Left ventricle myocardium superior (tissue), 1 donor: ENCODE measurements at regions of chr2 and their contacts with region 1.

Region 1: DNA sequence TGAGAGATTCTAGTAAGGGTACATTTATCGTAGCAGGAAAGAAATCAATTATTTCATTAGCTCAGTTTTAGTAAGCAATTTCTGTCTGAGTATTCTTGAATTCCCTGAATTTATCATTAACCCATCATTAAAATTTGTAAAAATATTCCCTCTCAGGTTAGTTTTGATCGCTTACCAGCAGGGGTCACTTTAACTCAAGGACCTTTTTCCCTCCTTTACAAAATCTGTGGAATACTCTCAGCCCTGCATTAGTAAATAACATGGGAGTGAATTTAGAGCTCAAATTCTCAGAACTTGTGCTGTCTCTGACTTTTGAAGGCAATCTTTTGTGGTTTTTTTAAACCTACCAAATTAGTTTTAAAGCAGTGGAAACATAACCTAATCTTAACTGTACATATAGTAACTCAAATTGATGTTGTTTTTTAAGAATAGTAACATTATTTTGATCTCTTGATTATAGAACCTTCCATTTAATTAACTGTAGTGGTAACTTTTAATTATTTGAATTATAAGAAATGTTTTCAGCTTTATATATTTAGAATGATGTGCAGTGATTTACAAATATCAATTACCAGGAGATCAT is 97.2 kb downstream of the AGPS start:
- DNase-seq: no peak
- ATAC-seq: no peak

Region 2: DNA sequence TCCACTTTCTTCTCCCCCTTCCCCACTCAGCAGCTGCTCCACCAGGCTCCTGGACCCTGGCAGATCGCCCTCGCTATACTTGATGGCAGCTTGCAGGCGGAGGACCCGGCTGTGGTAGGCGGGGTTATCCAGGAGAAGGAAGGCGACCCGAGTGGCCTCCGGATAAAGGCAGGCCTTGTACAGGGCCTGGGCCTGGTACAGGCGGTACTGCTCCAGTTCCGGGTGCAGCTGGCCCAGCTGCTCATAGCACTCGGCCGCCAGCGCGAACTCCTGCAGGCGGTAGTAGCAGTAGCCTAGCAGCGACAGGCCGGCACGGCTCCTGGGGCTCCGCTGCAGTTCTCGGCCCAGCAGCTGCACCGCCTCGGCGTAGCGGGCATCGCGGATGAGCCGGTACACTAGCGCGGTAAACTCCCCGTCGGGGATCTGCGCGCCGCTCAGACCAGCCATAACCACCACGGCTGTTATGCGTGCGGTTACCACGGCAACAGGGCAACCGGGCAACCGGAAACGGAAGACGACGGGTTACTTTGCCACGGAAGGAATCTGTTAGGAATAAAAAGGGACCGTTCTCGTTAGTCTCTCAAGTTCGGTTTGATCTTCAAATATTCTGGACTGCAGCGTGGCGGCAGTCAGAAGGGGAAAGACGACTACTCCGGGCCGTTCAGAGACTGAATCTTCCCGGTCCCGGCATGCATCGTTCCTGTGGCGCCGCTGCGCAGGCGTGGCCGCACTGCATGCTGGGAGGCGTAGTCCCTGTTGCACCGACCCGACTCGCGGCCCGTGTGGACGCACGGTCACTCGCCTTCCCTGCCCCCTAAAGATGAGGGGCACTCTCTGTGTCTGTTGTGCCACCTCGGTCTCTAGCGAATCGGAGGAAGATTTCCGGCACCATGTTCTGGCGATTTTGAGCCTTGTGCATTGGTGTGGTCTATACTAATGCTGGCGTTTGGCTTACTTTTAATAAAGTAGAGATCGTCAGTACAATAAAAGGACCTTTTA is 128.7 kb after region 1 on chr2:
- intact Hi-C with region 1: loop called (anchors 10 kb)
- DNase-seq: peak; percentile 95
- ATAC-seq: peak; percentile 98

Region 3: DNA sequence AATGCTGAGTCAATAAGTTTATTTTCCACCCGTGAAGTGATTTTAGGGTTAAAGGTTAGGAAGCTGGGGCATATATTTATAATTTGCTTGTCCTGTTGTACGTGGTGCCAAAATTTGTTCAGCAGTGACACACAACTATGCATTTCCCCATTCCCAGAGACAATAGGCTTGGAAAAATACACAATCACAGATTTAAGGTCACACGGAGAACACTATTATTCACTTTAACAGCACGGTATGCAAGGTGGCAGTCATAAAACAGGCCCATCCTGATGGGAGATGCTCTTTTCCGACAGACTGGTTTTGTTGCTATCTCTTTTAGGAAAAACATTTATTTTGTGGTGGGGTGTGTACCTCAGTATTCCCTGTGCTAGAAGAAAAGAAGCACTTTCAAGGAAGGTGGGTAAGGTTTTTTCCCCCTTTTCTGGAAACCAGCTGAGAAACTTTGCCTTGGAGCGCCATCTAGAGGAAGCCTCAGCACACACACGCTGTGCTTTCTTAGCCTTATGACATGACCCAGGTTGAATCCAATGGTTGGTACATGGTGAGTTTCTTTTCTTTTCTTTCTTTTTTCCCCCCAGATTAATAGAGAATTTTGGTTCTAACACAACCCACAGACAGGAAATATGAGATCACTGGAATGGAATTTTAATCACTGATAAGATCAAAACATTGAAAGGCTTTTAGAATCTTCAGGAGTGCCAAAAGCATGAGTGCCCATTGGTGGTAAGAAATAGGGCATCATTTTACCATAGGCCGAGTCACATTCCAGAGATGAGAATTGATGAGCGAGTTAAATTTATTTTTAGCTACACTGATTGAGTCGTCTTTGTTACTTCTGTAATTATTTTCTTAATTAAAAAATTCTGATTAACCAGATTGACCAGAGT is 234.8 kb after region 1 on chr2:
- intact Hi-C with region 1: loop called (anchors 5 kb)
- DNase-seq: peak; percentile 43
- ATAC-seq: peak; percentile 54

Region 4: DNA sequence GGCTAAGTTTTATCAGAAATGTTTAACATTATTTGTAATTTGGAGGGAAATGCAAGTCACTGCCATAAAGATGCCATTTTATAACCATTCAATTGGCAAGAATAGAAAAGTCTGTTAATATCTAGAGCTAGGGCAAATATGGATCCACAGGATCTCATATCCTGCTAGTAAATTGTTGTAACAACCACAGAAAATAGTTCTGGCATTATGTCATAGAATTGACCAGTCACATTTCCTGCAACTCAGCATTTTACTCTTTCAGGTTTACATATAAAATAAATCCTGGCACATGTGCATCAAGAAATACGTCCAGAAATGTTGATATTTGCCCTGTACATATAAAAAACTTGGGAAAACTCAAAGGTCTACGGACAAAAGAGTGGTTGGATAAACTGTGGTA is 737.4 kb after region 1 on chr2:
- intact Hi-C with region 1: no loop called
- DNase-seq: no peak
- ATAC-seq: no peak